Transverse colon (tissue), 4 donors: ENCODE measurements at regions of chr21 and their contacts with region 1.

Region 1: GRCh38 chr21:39860600-39860999 is 6.6 kb upstream of the PCP4 start:
- DNase-seq: no peak
- H3K4me3 ChIP-seq: no peak overlapping the region
- H3K27ac ChIP-seq: no peak overlapping the region
- H3K4me1 ChIP-seq: no peaks in the 10 kb centered on the region
- H3K27me3 ChIP-seq: no peaks in the 10 kb centered on the region
- CTCF ChIP-seq: no peak
- EP300 ChIP-seq: no peak
- POLR2A ChIP-seq: no peak

Region 2: DNA sequence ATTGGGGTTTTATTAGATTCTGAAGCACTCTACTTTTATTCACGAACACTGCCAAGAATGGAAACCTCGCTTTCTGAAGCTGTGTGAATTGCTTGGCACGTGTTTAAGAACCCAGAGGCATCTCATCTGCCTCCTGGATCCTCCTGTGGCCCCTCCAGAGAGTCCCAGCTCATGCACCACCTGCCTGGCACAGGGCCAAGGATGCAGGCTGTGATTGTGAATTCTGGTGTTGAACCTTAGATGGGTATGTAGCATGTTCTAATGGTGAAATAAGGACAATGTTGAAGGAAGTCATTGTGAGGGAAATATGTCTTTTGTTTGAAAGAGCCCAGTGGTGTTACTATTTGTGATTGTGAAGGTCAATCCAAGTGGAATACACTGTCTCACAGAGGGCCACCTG is 32.8 kb after region 1 on chr21:
- in situ Hi-C with region 1: no loop called
- intact Hi-C with region 1: loop called (anchors 1 kb)
- DNase-seq: no peak
- H3K4me3 ChIP-seq: no peak overlapping the region
- H3K27ac ChIP-seq: no peak overlapping the region
- H3K4me1 ChIP-seq: no peaks in the 10 kb centered on the region
- H3K27me3 ChIP-seq: no peaks in the 10 kb centered on the region
- CTCF ChIP-seq: no peak
- EP300 ChIP-seq: no peak
- POLR2A ChIP-seq: no peak